ENCODE measurements at regions of chr17 and their contacts with region 1.

Region 1: GRCh38 chr17:40443583-40444327 is 505 bp downstream of the IGFBP4 start:
- DNase-seq: peak; percentile 83
- ATAC-seq: peak; percentile 80
- H3K4me3 ChIP-seq: peak overlapping the region; percentile 28 to 66 (median 48)
- H3K4me3 Mint-ChIP-seq: peak overlapping the region; percentile 88
- H3K27ac ChIP-seq: peak overlapping the region in 1 of 2 donors; percentile 62
- H3K27ac Mint-ChIP-seq: peak overlapping the region; percentile 84
- H3K4me1 ChIP-seq: peaks cover 29 to 44% of the 10 kb centered on the region in 2 donors
- H3K4me1 Mint-ChIP-seq: peaks cover 46% of the 10 kb centered on the region
- H3K27me3 ChIP-seq: peaks cover 0 to 6% (median 0%) of the 10 kb centered on the region in 4 experiments
- H3K27me3 Mint-ChIP-seq: no peaks in the 10 kb centered on the region
- CTCF ChIP-seq: peak; percentile 47

Region 2: GRCh38 chr17:40121181-40122135 is 322.3 kb before region 1 on chr17 and contains the start of gene MSL1:
- CTCF ChIA-PET with region 1: no interaction called
- POLR2A ChIA-PET with region 1: no interaction called
- intact Hi-C with region 1: no loop called
- DNase-seq: peak; percentile 90
- ATAC-seq: peak; percentile 71
- H3K4me3 ChIP-seq: peak within 1 kb of the TSS; percentile 50 to 81 (median 77)
- H3K4me3 Mint-ChIP-seq: peak within 1 kb of the TSS; percentile 86
- H3K27ac ChIP-seq: peak within 1 kb of the TSS; percentile 55 to 79
- H3K27ac Mint-ChIP-seq: peak within 1 kb of the TSS; percentile 82
- H3K4me1 ChIP-seq: peaks cover 21 to 23% of the 10 kb centered on the region in 2 donors
- H3K4me1 Mint-ChIP-seq: peaks cover 32% of the 10 kb centered on the region
- H3K27me3 ChIP-seq: no peaks in the 10 kb centered on the region
- H3K27me3 Mint-ChIP-seq: no peaks in the 10 kb centered on the region
- CTCF ChIP-seq: no peak
- total RNA-seq, gene MSL1: 125 and 129 TPM in 2 replicates

Region 3: GRCh38 chr17:40399185-40399584 is 44.6 kb before region 1 on chr17:
- CTCF ChIA-PET with region 1: interaction called, 3 read pairs
- POLR2A ChIA-PET with region 1: no interaction called
- intact Hi-C with region 1: loop called (anchors 5 kb)
- DNase-seq: peak; percentile 74
- ATAC-seq: peak; percentile 54
- H3K4me3 ChIP-seq: no peak overlapping the region
- H3K4me3 Mint-ChIP-seq: no peak overlapping the region
- H3K27ac ChIP-seq: no peak overlapping the region
- H3K27ac Mint-ChIP-seq: no peak overlapping the region
- H3K4me1 ChIP-seq: peaks cover 0 to 8% of the 10 kb centered on the region in 2 donors
- H3K4me1 Mint-ChIP-seq: peaks cover 7% of the 10 kb centered on the region
- H3K27me3 ChIP-seq: no peaks in the 10 kb centered on the region
- H3K27me3 Mint-ChIP-seq: no peaks in the 10 kb centered on the region
- CTCF ChIP-seq: peak; percentile 88

Region 4: DNA sequence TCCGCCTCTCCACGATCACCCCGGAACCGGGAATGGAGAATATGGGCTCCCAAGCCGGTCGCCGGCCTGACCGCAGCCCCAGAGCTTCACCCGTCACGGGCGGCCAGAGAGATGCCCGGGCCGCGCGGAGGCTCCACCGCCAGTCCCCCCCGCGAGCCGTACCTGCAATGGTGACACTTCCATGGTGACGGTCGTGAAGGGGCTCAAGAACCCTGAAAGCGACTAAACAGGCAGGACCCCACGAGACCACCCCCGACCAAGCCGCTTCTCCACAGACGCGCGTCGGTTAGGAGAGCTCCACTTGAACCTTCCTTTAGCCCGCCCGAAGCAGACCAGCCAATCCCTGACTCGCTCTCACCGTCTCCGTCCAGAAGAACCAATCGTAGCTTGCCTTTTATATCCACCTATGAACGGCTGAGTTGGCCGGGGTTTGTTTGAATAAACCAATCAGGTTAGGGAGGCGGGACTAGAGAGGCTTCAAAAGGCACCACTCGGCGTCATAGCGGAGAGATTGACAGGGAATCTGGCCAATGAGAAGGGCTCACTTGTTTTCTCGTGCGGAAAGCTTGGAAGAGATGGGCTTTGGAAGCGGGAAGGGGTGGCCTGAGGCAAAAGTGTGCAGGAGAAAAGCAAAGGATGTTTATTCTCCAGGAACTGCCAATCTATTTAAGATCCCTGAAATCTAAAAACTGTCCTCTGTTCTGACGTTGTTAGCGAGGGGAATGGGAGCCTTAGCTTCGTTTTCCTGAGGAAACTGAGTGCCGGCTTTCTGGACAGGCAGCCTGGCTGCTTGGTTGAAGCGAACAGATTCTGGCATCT is 25.9 kb before region 1 on chr17 and contains the start of gene TOP2A:
- CTCF ChIA-PET with region 1: interaction called, 7 read pairs
- POLR2A ChIA-PET with region 1: interaction called, 3 read pairs
- intact Hi-C with region 1: loop called (anchors 1 kb)
- DNase-seq: peak; percentile 99
- ATAC-seq: peak; percentile 99
- H3K4me3 ChIP-seq: peak within 1 kb of the TSS; percentile 63 to 93 (median 84)
- H3K4me3 Mint-ChIP-seq: peak within 1 kb of the TSS; percentile 89
- H3K27ac ChIP-seq: peak within 1 kb of the TSS; percentile 63 to 72
- H3K27ac Mint-ChIP-seq: peak within 1 kb of the TSS; percentile 86
- H3K4me1 ChIP-seq: peaks cover 7 to 17% of the 10 kb centered on the region in 2 donors
- H3K4me1 Mint-ChIP-seq: peaks cover 15% of the 10 kb centered on the region
- H3K27me3 ChIP-seq: no peaks in the 10 kb centered on the region
- H3K27me3 Mint-ChIP-seq: no peaks in the 10 kb centered on the region
- CTCF ChIP-seq: no peak
- total RNA-seq, gene TOP2A: 3.0 and 3.1 TPM in 2 replicates

Region 5: DNA sequence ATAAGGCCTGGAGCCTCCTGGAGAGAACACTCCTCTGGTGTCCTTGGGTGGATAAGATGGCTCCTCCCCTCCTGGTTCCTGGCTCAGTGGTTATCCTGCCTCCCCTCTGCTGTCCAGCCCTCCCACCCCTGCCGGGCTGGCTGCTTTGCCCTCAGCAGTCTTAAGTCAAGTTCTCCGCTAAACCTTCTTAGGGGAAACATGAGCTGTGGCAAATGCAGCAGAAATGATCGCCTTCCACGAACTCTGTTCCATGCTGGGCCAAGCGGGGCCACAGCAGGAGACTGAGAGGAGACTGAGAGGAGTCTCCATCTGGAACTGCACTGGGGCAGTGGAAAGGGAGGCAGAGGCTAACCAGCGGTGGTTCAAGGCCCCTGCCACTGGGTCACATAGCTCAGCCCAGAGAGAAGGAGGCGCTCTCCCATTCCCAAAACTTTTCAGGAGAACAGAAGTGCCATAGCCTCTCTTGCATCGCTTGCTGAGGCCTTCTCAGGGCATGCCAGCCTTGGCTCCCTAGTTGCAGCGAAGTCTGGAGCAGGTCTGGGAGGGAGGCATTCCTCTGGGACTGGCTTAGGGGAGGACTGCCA is 30.8 kb after region 1 on chr17:
- CTCF ChIA-PET with region 1: interaction called, 22 read pairs
- POLR2A ChIA-PET with region 1: interaction called, 7 read pairs
- intact Hi-C with region 1: loop called (anchors 5 kb)
- DNase-seq: no peak
- ATAC-seq: no peak
- H3K4me3 ChIP-seq: no peak overlapping the region
- H3K4me3 Mint-ChIP-seq: no peak overlapping the region
- H3K27ac ChIP-seq: no peak overlapping the region
- H3K27ac Mint-ChIP-seq: no peak overlapping the region
- H3K4me1 ChIP-seq: peaks cover 12 to 23% of the 10 kb centered on the region in 2 donors
- H3K4me1 Mint-ChIP-seq: peaks cover 10% of the 10 kb centered on the region
- H3K27me3 ChIP-seq: peaks cover 0 to 4% (median 1%) of the 10 kb centered on the region in 4 experiments
- H3K27me3 Mint-ChIP-seq: no peaks in the 10 kb centered on the region
- CTCF ChIP-seq: no peak

Region 6: GRCh38 chr17:40480501-40481003 is 36.8 kb after region 1 on chr17:
- CTCF ChIA-PET with region 1: interaction called, 22 read pairs
- POLR2A ChIA-PET with region 1: interaction called, 7 read pairs
- intact Hi-C with region 1: loop called (anchors 5 kb)
- DNase-seq: peak; percentile 89
- ATAC-seq: peak; percentile 86
- H3K4me3 ChIP-seq: peak overlapping the region in 3 of 5 experiments; percentile 3 to 39 (median 5)
- H3K4me3 Mint-ChIP-seq: peak overlapping the region; percentile 80
- H3K27ac ChIP-seq: peak overlapping the region; percentile 53 to 86
- H3K27ac Mint-ChIP-seq: peak overlapping the region; percentile 92
- H3K4me1 ChIP-seq: peaks cover 44 to 56% of the 10 kb centered on the region in 2 donors
- H3K4me1 Mint-ChIP-seq: peaks cover 45% of the 10 kb centered on the region
- H3K27me3 ChIP-seq: no peaks in the 10 kb centered on the region
- H3K27me3 Mint-ChIP-seq: no peaks in the 10 kb centered on the region
- CTCF ChIP-seq: no peak

Region 7: DNA sequence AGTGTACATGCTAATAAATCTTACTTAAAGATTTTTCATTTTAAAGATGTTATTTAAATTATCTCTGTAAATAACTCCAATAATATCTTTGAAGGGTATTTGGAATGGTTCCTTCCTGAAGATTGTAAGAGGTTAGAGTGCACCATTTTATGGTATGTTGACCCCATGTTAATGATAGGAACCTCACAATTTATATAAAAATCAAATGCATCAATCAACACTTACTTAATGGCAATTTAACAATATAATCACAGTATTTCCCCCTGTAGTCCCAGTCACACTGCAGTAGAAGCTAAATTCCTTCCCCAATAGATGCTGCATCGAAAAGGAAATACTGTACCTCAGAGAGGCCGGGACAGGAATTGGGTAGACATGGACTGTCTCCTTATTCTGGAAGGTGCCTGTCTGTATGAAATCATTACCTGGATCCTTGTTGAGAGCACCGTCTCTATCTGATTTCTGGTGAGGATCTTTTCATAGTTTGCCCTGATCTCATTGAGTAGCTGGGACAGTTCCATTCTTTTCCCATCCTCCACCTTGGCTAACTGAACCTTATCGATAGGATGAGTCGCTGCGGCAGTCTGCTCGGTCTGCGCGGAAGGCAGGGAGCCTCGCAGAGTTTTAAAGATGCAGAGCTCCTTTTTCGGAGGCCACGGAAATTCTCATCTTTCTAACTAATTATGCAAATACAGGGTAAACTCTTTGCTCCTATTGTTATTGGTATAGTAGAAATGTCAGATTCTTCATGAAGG is 221.0 kb after region 1 on chr17 and contains the start of gene KRT222:
- CTCF ChIA-PET with region 1: no interaction called
- POLR2A ChIA-PET with region 1: no interaction called
- intact Hi-C with region 1: no loop called
- DNase-seq: no peak
- ATAC-seq: no peak
- H3K4me3 ChIP-seq: no peak within 1 kb of the TSS
- H3K4me3 Mint-ChIP-seq: peak within 1 kb of the TSS; percentile 29
- H3K27ac ChIP-seq: no peak within 1 kb of the TSS
- H3K27ac Mint-ChIP-seq: no peak within 1 kb of the TSS
- H3K4me1 ChIP-seq: peaks cover 3 to 4% of the 10 kb centered on the region in 2 donors
- H3K4me1 Mint-ChIP-seq: peaks cover 6% of the 10 kb centered on the region
- H3K27me3 ChIP-seq: peaks cover 2 to 36% (median 21%) of the 10 kb centered on the region in 4 experiments
- H3K27me3 Mint-ChIP-seq: peaks cover 47% of the 10 kb centered on the region
- CTCF ChIP-seq: no peak
- total RNA-seq, gene KRT222: not detected in 2 replicates

Region 8: GRCh38 chr17:40791787-40792436 is 348.2 kb after region 1 on chr17:
- CTCF ChIA-PET with region 1: interaction called, 6 read pairs
- POLR2A ChIA-PET with region 1: no interaction called
- intact Hi-C with region 1: loop called (anchors 5 kb)
- DNase-seq: peak; percentile 25
- ATAC-seq: no peak
- H3K4me3 ChIP-seq: no peak overlapping the region
- H3K4me3 Mint-ChIP-seq: no peak overlapping the region
- H3K27ac ChIP-seq: no peak overlapping the region
- H3K27ac Mint-ChIP-seq: no peak overlapping the region
- H3K4me1 ChIP-seq: no peaks in the 10 kb centered on the region
- H3K4me1 Mint-ChIP-seq: no peaks in the 10 kb centered on the region
- H3K27me3 ChIP-seq: peaks cover 0 to 17% (median 2%) of the 10 kb centered on the region in 4 experiments
- H3K27me3 Mint-ChIP-seq: peaks cover 35% of the 10 kb centered on the region
- CTCF ChIP-seq: peak; percentile 41